Mammary epithelial cell (primary cell): ENCODE measurements at regions of chr6 and their contacts with region 1.

Region 1: GRCh38 chr6:104682722-104683643 is 176.7 kb downstream of the HACE1 start:
- DNase-seq: peak; percentile 14
- H3K4me3 ChIP-seq: no peak overlapping the region
- H3K27ac ChIP-seq: no peak overlapping the region
- H3K4me1 ChIP-seq: no peaks in the 10 kb centered on the region
- H3K27me3 ChIP-seq: no peaks in the 10 kb centered on the region
- CTCF ChIP-seq: peak; percentile 89 to 93

Region 2: GRCh38 chr6:104771258-104771832 is 88.4 kb after region 1 on chr6:
- CTCF ChIA-PET with region 1: no interaction called
- dilution Hi-C with region 1: no loop called
- in situ Hi-C with region 1: no loop called
- intact Hi-C with region 1: loop called (anchors 1 kb)
- DNase-seq: no peak
- H3K4me3 ChIP-seq: no peak overlapping the region
- H3K27ac ChIP-seq: no peak overlapping the region
- H3K4me1 ChIP-seq: no peaks in the 10 kb centered on the region
- H3K27me3 ChIP-seq: no peaks in the 10 kb centered on the region
- CTCF ChIP-seq: peak; percentile 42 to 52